Adrenal gland (tissue), 19 donors: ENCODE measurements at regions of chr9 and their contacts with region 1.

Region 1: DNA sequence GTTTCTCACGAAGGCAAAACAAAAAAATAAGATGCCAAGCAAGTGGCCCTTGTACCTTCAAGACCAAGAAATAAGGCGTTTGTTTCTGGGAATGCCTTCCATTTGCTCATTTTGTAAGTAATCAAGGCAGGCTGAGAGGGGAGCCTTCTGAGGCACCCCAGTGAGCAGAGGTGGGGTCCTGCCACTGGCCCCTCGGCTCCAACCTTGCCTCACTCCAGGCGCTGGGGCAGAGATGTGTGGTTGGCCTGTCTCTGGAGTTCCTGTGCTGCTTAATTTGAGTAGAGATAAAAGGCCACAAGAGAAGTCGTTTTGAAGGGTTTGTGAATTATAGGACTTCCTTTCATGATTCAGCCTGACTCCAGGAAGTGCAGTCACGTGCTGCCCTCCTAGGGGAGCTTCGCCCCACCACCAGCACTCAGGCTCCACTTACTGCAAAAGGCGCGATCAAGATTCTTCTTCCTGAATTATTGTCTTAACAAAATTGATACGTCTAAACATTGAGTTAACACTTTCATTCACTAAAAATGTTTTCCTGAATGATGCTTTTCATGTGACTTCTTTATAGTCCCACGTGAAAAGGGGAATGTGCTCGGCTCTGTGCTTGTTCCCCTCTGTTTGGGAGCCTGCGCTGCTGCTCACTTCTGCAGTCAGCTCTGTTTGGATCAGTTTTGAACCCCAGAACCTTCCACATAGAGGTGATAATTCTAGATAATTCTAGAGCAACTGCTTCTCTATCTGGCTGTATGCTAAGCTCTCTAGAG is 13.7 kb downstream of the SYK start:
- DNase-seq: peak in 3 of 7 donors; percentile 28 to 44 (median 37)
- H3K4me3 ChIP-seq: no peak overlapping the region
- H3K27ac ChIP-seq: peak overlapping the region in 1 of 5 donors; percentile 30
- H3K4me1 ChIP-seq: peaks cover 0 to 9% of the 10 kb centered on the region in 2 donors
- H3K27me3 ChIP-seq: no peaks in the 10 kb centered on the region
- CTCF ChIP-seq: no peak
- POLR2A ChIP-seq: no peak

Region 2: DNA sequence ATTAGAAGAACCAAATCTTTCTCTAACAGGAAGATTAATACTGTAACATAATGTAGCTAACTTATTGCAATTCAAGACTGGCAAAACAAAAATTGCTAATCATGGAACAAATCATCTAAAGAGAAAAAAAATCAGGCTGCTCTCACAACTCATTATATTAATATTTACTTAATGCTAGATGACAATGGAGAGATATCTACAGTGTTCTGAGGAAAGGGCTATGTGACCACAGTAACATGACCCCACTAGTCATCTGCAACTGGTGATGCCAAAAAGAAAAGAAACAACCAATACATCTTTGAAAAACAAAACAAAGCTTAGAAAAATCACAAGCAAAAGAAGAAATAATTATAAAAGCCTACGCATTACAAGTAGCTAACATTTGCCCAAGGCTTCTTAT is 335.7 kb before region 1 on chr9:
- intact Hi-C with region 1: no loop called
- DNase-seq: no peak
- H3K4me3 ChIP-seq: no peak overlapping the region
- H3K27ac ChIP-seq: no peak overlapping the region
- H3K4me1 ChIP-seq: no peaks in the 10 kb centered on the region
- H3K27me3 ChIP-seq: no peaks in the 10 kb centered on the region
- CTCF ChIP-seq: no peak
- POLR2A ChIP-seq: no peak

Region 3: DNA sequence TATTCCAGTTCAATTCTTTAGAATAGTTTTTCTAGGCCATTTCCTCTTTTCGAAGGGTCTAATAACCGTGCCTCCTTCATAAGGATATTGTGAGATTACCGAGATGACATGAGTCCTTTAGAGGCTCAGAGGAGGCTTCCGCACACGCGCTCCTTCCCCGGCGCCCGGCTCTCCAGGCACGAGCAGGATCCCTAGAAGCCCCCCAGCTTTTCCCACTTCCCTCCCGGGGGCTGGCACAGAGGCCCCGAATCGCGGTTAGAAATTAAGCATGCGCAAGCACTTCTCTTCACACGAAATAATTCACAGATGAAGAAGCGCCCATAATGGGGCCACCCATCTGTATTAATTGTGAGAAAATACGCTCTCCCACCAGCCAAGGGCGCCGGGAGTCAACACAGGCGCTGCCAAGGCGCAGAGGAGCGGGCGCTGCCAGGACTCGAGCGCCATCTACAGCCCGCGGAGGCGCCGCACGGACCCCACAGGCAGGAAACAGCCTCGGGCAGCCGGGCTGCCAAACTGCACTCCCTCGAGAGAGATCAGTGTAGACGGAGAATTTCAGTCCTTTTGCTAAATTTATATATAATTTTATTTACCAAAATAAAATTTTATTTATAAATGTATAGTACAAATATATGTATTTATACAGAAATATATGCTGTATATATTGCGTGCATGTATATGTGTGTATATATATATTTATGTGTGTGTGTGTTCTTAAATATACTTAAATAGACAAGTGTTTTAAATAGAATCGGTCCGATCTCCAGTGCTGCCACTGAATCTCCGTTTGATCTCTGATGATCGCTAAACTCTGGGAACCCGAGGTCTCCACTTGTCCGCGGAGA is 866.3 kb after region 1 on chr9:
- intact Hi-C with region 1: loop called in 1 of 2 experiments (anchors 5 kb)
- DNase-seq: peak; percentile 68 to 85 (median 80)
- H3K4me3 ChIP-seq: peak overlapping the region in 1 of 4 donors; percentile 1
- H3K27ac ChIP-seq: no peak overlapping the region
- H3K4me1 ChIP-seq: peaks cover 0 to 5% of the 10 kb centered on the region in 2 donors
- H3K27me3 ChIP-seq: no peaks in the 10 kb centered on the region
- CTCF ChIP-seq: peak; percentile 62 to 92 (median 74)
- POLR2A ChIP-seq: no peak